HCT116 (cell line): ENCODE measurements at regions of chr2 and their contacts with region 1.

Region 1: GRCh38 chr2:118865106-118865505 is 17.7 kb upstream of the EN1 start:
- DNase-seq: peak; percentile 45
- ATAC-seq: peak; percentile 100
- H3K4me3 ChIP-seq: no peak overlapping the region
- H3K27ac ChIP-seq: no peak overlapping the region
- H3K4me1 ChIP-seq: no peaks in the 10 kb centered on the region
- H3K27me3 ChIP-seq: no peaks in the 10 kb centered on the region
- CTCF ChIP-seq: peak; percentile 61 to 73 (median 68); a peak in 5 of 6 replicates
- POLR2A ChIP-seq: no peak
- RAD21 ChIP-seq: peak; percentile 77

Region 2: GRCh38 chr2:117470311-117471095 is 1394.6 kb before region 1 on chr2:
- CTCF ChIA-PET with region 1: no interaction called
- POLR2A ChIA-PET with region 1: no interaction called
- RAD21 ChIA-PET with region 1: no interaction called
- intact Hi-C with region 1: loop called (anchors 10 kb)
- DNase-seq: peak; percentile 6
- ATAC-seq: no peak
- H3K4me3 ChIP-seq: no peak overlapping the region
- H3K27ac ChIP-seq: no peak overlapping the region
- H3K4me1 ChIP-seq: no peaks in the 10 kb centered on the region
- H3K27me3 ChIP-seq: no peaks in the 10 kb centered on the region
- CTCF ChIP-seq: peak in 2 of 3 experiments; percentile 42 to 63; a peak in 4 of 6 replicates
- POLR2A ChIP-seq: no peak
- RAD21 ChIP-seq: peak; percentile 19; the same call in 1 of the 2 replicates

Region 3: GRCh38 chr2:117835990-117836760 is 1028.9 kb before region 1 on chr2:
- CTCF ChIA-PET with region 1: no interaction called
- POLR2A ChIA-PET with region 1: no interaction called
- RAD21 ChIA-PET with region 1: no interaction called
- intact Hi-C with region 1: loop called (anchors 10 kb)
- DNase-seq: no peak
- ATAC-seq: peak; percentile 63
- H3K4me3 ChIP-seq: no peak overlapping the region
- H3K27ac ChIP-seq: no peak overlapping the region
- H3K4me1 ChIP-seq: no peaks in the 10 kb centered on the region
- H3K27me3 ChIP-seq: no peaks in the 10 kb centered on the region
- CTCF ChIP-seq: peak; percentile 27 to 55 (median 50); a peak in 5 of 6 replicates
- POLR2A ChIP-seq: no peak
- RAD21 ChIP-seq: 0 out of 2 replicates have a peak, but pooled peaks have one; percentile 16

Region 4: DNA sequence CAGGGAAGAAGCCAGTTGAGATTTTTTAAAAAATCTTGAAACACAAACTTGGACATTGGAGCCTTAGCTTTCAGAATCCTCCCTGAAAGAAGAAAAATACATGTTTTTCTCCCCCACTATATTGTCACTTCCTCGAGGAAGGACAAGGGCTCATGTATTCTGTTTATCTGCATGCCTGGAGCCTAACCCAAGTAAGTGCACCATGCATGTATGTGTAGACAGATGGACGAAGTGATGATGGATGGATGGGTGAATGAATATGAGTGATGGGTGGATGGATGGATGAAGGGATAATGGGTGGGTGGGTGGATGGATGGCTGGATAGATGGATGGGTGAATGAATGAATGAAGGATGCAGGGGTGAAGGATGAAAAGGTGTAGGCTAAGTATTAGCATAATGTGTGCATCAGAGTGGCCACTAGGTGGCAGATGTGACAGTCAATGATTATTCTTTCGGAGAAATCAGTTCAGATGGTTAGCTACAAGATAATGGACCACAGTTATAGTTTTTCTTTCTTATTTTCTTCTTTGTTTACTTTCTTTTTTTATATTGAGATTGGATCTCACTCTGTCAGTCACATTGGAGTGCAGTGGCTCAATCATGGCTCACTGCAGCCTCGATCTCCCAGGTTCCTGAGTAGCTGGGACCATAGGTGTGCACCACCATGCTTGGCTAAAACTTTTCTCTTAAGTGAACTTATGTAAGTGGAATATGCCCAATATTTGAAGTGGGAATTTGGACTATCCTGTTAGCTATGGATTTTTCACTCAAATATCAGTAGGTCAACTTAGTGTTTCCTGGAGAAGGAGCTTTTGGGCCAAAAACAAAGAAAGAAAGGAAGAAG is 832.7 kb before region 1 on chr2:
- CTCF ChIA-PET with region 1: interaction called, 3 read pairs
- POLR2A ChIA-PET with region 1: no interaction called
- RAD21 ChIA-PET with region 1: no interaction called
- intact Hi-C with region 1: loop called (anchors 5 kb)
- DNase-seq: no peak
- ATAC-seq: peak; percentile 94
- H3K4me3 ChIP-seq: no peak overlapping the region
- H3K27ac ChIP-seq: no peak overlapping the region
- H3K4me1 ChIP-seq: no peaks in the 10 kb centered on the region
- H3K27me3 ChIP-seq: no peaks in the 10 kb centered on the region
- CTCF ChIP-seq: peak; percentile 49 to 78 (median 65); a peak in 5 of 6 replicates
- POLR2A ChIP-seq: no peak
- RAD21 ChIP-seq: peak; percentile 57

Region 5: GRCh38 chr2:118202707-118203303 is 662.3 kb before region 1 on chr2:
- CTCF ChIA-PET with region 1: no interaction called
- POLR2A ChIA-PET with region 1: no interaction called
- RAD21 ChIA-PET with region 1: no interaction called
- intact Hi-C with region 1: loop called (anchors 2 kb)
- DNase-seq: no peak
- ATAC-seq: peak; percentile 96
- H3K4me3 ChIP-seq: no peak overlapping the region
- H3K27ac ChIP-seq: no peak overlapping the region
- H3K4me1 ChIP-seq: peaks cover 0 to 3% of the 10 kb centered on the region in 2 experiments; a peak in 1 of 4 replicates
- H3K27me3 ChIP-seq: no peaks in the 10 kb centered on the region
- CTCF ChIP-seq: peak; percentile 47 to 89 (median 88); a peak in 5 of 6 replicates
- POLR2A ChIP-seq: no peak
- RAD21 ChIP-seq: peak; percentile 63

Region 6: DNA sequence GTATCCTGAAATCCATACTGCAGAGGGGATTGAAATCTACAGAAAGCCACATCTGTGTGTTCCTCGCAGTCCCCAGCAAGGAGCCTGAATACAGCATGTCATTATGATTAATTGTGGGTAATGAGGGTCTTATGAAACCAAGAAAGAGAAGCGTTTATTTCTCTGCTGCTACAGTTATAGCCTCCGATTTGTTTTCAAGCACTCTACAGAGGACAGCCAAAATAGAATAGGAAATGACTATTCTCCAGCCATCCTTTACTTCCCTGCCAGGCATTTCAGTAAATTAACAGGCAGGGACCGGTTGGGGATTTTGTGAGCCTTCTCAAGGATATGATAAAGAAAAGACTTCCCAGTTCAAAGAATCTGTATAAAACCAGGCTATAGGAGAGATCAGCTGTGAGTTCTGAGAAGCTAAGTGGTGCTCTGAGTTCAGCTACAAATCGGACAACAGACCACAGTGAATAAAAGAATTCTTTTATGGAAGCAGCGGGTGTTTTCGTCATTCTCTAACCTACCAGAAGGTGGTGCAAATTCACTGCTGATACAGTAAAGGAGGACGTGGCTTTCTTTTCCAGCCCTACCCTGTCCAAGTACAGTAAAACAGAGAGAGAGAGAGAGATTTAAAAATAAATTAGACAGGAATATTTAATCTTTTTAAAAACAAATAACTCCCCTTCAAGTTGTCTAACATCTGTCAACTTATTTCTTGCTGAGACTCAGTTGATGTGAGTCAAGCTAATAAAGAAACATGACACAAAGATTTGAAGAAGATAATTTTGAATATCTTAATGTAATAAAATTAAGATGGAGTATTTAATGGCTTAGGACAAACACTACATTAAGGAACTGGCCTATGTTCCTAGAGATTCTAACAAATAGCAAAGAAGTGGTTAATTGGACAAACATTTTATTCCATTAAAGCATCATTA is 643.2 kb before region 1 on chr2:
- CTCF ChIA-PET with region 1: no interaction called
- POLR2A ChIA-PET with region 1: no interaction called
- RAD21 ChIA-PET with region 1: no interaction called
- intact Hi-C with region 1: loop called (anchors 1 kb)
- DNase-seq: peak; percentile 53
- ATAC-seq: peak; percentile 97
- H3K4me3 ChIP-seq: no peak overlapping the region
- H3K27ac ChIP-seq: no peak overlapping the region
- H3K4me1 ChIP-seq: no peaks in the 10 kb centered on the region
- H3K27me3 ChIP-seq: no peaks in the 10 kb centered on the region
- CTCF ChIP-seq: peak; percentile 64 to 84 (median 67)
- POLR2A ChIP-seq: no peak
- RAD21 ChIP-seq: peak; percentile 87

Region 7: DNA sequence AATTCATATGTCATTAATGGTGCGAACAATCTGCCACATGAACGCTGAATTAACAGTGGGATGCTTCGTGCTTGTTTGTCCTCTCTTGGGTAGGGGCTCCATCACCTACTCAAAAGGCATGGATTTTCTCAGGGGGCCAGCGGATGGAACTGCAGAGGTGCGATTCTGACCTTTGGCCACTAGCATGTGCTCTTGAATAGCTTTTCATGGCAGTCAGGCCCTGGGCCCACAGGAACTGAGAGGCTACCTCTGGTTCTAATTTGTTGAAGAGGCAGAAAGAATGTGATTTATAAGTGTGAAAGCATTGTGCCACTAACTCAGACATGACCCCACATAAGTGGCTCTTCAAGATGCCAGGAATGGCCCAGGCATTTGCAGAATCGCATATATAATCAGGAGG is 493.6 kb before region 1 on chr2:
- CTCF ChIA-PET with region 1: no interaction called
- POLR2A ChIA-PET with region 1: no interaction called
- RAD21 ChIA-PET with region 1: no interaction called
- intact Hi-C with region 1: loop called (anchors 2 kb)
- DNase-seq: peak; percentile 19
- ATAC-seq: peak; percentile 89
- H3K4me3 ChIP-seq: no peak overlapping the region
- H3K27ac ChIP-seq: no peak overlapping the region
- H3K4me1 ChIP-seq: no peaks in the 10 kb centered on the region
- H3K27me3 ChIP-seq: no peaks in the 10 kb centered on the region
- CTCF ChIP-seq: peak; percentile 63 to 78 (median 69); a peak in 5 of 6 replicates
- POLR2A ChIP-seq: no peak
- RAD21 ChIP-seq: peak; percentile 80